ENCODE measurements at regions of chr1 and their contacts with region 1.

Region 1: GRCh38 chr1:95072532-95073419 is at the start of gene ALG14:
- DNase-seq: peak; percentile 91
- ATAC-seq: peak; percentile 95
- H3K4me3 ChIP-seq: peak within 1 kb of the TSS; percentile 90 to 96 (median 93)
- H3K27ac ChIP-seq: peak within 1 kb of the TSS; percentile 80
- H3K4me1 ChIP-seq: peaks cover 66% of the 10 kb centered on the region
- H3K27me3 ChIP-seq: no peaks in the 10 kb centered on the region
- CTCF ChIP-seq: peak; percentile 19; the same call in 1 of the 2 replicates
- EP300 ChIP-seq: no peak
- POLR2A ChIP-seq: peak; percentile 61 to 80
- RAD21 ChIP-seq: 0 out of 2 replicates have a peak, but pooled peaks have one; percentile 9
- total RNA-seq, gene ALG14: 6.1 and 12.7 TPM in 2 replicates

Region 2: DNA sequence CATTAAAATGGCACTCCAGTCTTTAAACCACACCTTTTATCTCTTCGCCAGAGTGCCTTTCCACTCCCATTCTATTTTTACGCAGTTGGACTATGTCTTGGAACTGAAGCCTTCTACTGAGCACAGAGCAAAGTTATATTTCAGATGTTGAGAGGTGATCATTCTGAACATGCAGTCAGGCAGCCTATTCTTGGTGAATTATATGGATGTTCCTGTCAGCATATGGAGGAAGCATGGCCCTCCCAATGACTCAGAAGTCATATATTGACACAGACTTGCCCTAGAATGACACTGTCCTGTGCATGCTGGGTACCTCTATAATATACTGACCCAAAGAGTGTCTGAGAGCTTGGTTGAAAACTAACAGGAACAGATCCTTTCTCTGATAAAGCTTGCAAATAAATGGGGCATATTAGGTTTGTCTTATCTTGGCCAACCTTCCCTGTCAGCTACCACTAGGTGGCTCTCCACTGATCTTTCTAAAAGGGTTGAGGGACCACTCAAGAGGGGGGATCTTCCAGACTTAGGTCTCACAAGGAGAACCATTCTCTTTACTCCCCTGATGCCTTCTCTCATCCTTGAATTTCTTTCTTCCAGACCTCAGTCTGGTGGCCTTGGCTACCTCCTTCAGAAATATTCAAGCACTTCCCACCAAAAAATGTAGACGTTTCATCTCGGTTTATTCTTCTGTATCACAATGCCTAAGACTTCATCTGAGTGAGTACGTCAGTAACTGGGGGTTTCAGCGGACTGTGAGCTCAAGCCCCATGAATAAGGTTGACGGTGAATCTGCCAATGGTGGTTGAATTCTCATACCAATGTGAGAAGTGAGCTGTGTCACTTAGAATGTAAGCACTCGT is 11.8 kb after region 1 on chr1:
- CTCF ChIA-PET with region 1: no interaction called
- POLR2A ChIA-PET with region 1: interaction called, 32 read pairs
- in situ Hi-C with region 1: no loop called
- intact Hi-C with region 1: no loop called
- DNase-seq: peak; percentile 80
- ATAC-seq: peak; percentile 90
- H3K4me3 ChIP-seq: no peak overlapping the region
- H3K27ac ChIP-seq: no peak overlapping the region
- H3K4me1 ChIP-seq: peaks cover 48% of the 10 kb centered on the region
- H3K27me3 ChIP-seq: no peaks in the 10 kb centered on the region; a peak in 1 of 5 replicates
- CTCF ChIP-seq: peak; percentile 75
- EP300 ChIP-seq: peak in 1 of 2 experiments; percentile 34; a peak in 1 of 4 replicates
- POLR2A ChIP-seq: no peak
- RAD21 ChIP-seq: peak; percentile 37; the same call in 1 of the 2 replicates

Region 3: GRCh38 chr1:95122151-95122697 is 49.4 kb after region 1 on chr1:
- CTCF ChIA-PET with region 1: no interaction called
- POLR2A ChIA-PET with region 1: interaction called, 9 read pairs
- in situ Hi-C with region 1: loop called (anchors 10 kb)
- intact Hi-C with region 1: loop called (anchors 2 kb)
- DNase-seq: peak; percentile 99
- ATAC-seq: peak; percentile 91
- H3K4me3 ChIP-seq: no peak overlapping the region
- H3K27ac ChIP-seq: peak overlapping the region; percentile 96
- H3K4me1 ChIP-seq: peaks cover 72% of the 10 kb centered on the region
- H3K27me3 ChIP-seq: no peaks in the 10 kb centered on the region
- CTCF ChIP-seq: peak; percentile 20; the same call in 1 of the 2 replicates
- EP300 ChIP-seq: peak; percentile 84 to 95; a peak in 3 of 4 replicates
- POLR2A ChIP-seq: peak in 1 of 2 experiments; percentile 36; a peak in 1 of 4 replicates
- RAD21 ChIP-seq: 0 out of 2 replicates have a peak, but pooled peaks have one; percentile 31

Region 4: GRCh38 chr1:95221306-95221705 is 148.5 kb after region 1 on chr1:
- CTCF ChIA-PET with region 1: no interaction called
- POLR2A ChIA-PET with region 1: no interaction called
- in situ Hi-C with region 1: no loop called
- intact Hi-C with region 1: no loop called
- DNase-seq: no peak
- ATAC-seq: no peak
- H3K4me3 ChIP-seq: no peak overlapping the region
- H3K27ac ChIP-seq: no peak overlapping the region
- H3K4me1 ChIP-seq: no peaks in the 10 kb centered on the region
- H3K27me3 ChIP-seq: no peaks in the 10 kb centered on the region
- CTCF ChIP-seq: no peak
- EP300 ChIP-seq: no peak
- POLR2A ChIP-seq: no peak
- RAD21 ChIP-seq: no peak

Measured in HepG2 (cell line).